ENCODE measurements at regions of chr3 and their contacts with region 1.

Region 1: DNA sequence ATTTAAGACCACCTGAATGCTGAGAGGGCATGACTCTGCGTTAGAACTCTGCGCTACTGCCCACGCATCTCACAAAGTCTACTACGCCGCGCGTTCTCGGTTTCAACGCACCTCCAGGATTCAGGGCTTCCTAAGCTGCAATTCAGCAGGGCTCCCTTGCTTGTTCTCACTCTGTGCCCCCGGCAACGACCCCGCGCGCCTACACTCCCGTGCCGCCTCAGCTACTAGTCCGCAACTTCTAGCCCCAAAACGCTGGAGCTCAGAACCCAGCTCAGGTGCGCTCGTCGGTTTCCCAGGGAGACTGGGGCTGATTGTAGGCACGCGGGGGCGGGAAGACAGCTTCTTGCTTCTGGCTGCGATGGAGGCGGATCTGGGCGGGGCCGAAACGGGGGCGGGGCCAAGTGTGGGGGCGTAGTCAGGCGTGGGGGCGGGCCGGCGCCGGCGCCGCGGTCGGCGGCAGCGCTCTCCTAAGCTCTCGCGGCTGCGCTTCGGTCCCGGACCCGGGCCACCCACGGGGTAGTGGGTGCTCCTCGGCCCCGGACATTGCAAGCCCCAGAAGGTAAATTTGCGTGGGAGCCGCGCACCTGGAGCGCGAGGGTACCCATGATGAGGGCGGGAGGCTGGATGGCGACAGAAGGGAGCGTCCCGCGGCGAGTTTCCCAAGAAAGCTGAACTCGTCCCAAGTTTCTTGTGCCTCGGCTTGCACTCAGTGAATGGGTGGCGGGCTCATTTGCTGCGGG is at the start of gene ARHGEF26:
- DNase-seq: peak; percentile 86
- H3K4me3 Mint-ChIP-seq: peak within 1 kb of the TSS; percentile 88
- H3K27ac Mint-ChIP-seq: no peak within 1 kb of the TSS
- H3K4me1 Mint-ChIP-seq: peaks cover 13% of the 10 kb centered on the region
- H3K27me3 Mint-ChIP-seq: no peaks in the 10 kb centered on the region
- CTCF ChIP-seq: no peak
- total RNA-seq, gene ARHGEF26: 0.29 and 0.63 TPM in 2 replicates

Region 2: DNA sequence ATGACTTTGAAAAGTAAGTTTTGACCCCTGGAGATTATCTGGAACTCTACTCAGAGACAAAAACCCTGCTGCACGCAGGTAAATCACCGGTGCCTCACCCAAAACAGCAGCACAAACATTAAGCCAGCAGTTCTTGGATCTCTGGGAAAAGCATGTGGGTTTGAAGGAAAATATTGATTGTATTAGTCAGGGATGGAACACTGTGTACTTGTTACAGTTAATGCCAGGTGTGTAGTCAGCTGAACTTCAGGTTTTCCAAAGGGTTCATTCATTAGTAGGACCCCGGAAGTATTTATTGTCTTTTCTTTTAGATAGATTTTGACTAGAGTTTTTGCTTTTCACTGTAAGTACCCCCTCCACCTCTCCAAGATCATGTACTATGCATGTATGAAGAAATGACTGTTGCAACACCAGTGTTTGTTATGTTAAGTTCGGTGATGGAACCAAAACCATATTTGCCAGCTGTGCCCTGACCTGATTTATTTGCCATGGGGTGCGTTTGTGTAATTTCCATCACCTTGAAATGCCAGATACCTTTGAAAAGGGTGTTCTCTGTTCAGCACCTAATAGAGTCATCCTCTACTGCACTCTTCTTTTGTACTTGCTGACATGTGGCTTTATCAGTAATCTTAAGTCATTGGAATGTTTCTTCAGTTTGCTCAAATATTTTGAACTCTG is 14.5 kb after region 1 on chr3:
- CTCF ChIA-PET with region 1: no interaction called
- POLR2A ChIA-PET with region 1: interaction called, 17 read pairs
- intact Hi-C with region 1: no loop called
- DNase-seq: peak; percentile 26
- H3K4me3 Mint-ChIP-seq: no peak overlapping the region
- H3K27ac Mint-ChIP-seq: peak overlapping the region; percentile 1
- H3K4me1 Mint-ChIP-seq: peaks cover 17% of the 10 kb centered on the region
- H3K27me3 Mint-ChIP-seq: no peaks in the 10 kb centered on the region
- CTCF ChIP-seq: no peak

Measured in MCF 10A (cell line).